B cell (primary cell): ENCODE measurements at regions of chr1 and their contacts with region 1.

Region 1: DNA sequence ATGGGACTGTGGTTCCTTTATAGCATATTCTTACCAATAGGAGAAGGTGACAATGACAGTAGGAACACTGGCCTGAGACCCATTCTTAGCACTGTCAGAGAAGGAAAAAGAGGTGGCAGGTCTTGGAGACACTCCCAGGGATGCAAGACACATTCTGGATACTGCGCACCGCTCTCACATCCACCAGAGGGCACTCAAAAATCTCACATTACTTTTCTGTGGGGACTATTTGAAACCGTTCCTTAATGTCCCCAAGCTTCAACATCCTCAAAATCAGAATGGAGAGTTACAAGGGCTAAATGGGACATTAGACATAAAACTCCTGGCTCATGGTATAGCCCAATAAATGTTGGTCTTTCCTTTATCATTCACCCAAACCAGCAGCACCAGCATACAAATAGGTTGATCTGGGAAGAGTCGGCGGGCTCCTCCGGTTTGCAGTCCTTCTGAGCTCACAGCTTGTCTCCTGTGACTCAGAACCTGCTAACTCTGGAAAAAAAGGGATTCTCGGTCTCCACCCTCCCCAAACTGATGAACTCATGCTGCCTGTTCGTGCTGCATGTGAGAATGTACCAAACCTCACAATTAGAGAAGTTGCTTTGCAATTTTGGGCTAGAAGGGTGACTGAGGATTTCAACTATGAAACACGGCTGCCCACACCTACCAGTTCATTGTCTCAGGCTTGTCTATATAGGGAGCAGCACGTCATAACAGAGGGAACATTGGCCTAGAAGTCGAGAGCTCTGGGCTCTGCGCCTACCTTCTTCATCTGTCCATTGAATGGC is 40.2 kb downstream of the IL12RB2 start:
- DNase-seq: peak; percentile 27
- ATAC-seq: no peak
- H3K4me3 ChIP-seq: no peak overlapping the region
- H3K4me3 Mint-ChIP-seq: no peak overlapping the region
- H3K27ac ChIP-seq: no peak overlapping the region
- H3K27ac Mint-ChIP-seq: no peak overlapping the region
- H3K4me1 ChIP-seq: no peaks in the 10 kb centered on the region
- H3K4me1 Mint-ChIP-seq: peaks cover 5% of the 10 kb centered on the region
- H3K27me3 ChIP-seq: no peaks in the 10 kb centered on the region
- H3K27me3 Mint-ChIP-seq: peaks cover 3% of the 10 kb centered on the region
- CTCF ChIP-seq: peak; percentile 50

Region 2: DNA sequence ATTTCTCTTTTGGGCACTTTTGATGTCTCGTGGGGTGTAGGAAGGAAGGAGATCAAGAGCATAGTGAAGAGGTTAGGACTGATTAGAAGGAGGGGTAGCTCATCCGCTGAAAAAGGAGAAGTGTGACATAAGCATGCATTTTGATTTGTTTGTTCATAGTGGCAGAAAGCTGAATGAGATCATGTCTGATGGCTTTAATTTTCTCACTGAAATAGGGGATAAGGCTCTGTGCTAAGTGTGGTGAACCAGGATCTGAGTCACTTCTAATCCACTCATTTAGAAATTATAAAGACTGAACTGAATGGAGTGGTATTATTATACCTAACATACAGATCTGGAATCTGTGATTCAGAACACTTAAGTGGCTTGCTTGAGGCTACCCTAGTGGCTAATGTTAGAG is 1210.6 kb before region 1 on chr1:
- CTCF ChIA-PET with region 1: no interaction called
- POLR2A ChIA-PET with region 1: no interaction called
- intact Hi-C with region 1: loop called (anchors 10 kb)
- DNase-seq: no peak
- ATAC-seq: no peak
- H3K4me3 ChIP-seq: no peak overlapping the region
- H3K4me3 Mint-ChIP-seq: no peak overlapping the region
- H3K27ac ChIP-seq: no peak overlapping the region
- H3K27ac Mint-ChIP-seq: no peak overlapping the region
- H3K4me1 ChIP-seq: no peaks in the 10 kb centered on the region
- H3K4me1 Mint-ChIP-seq: peaks cover 3% of the 10 kb centered on the region
- H3K27me3 ChIP-seq: no peaks in the 10 kb centered on the region
- H3K27me3 Mint-ChIP-seq: peaks cover 12% of the 10 kb centered on the region
- CTCF ChIP-seq: no peak

Region 3: DNA sequence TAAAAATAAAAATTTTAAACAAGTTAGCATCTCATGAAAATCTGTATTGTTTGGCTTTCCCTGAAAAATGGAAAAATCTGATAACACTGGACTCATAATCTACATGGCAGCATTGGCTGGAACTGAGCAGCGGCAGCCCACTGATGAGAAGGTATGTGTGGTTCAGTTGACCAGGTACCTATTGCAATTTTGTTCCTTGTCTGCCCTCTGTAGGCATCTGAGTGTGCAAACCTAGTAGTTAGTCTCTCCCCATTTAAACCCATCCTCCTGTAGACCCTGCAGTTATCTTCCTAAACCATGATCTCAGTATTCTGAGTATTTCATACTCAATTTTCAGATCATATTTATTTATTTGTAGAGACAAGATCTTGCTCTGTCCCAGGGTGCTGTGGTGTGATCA is 141.8 kb after region 1 on chr1:
- CTCF ChIA-PET with region 1: interaction called, 4 read pairs
- POLR2A ChIA-PET with region 1: no interaction called
- intact Hi-C with region 1: loop called (anchors 5 kb)
- DNase-seq: peak; percentile 36
- ATAC-seq: peak; percentile 41
- H3K4me3 ChIP-seq: no peak overlapping the region
- H3K4me3 Mint-ChIP-seq: no peak overlapping the region
- H3K27ac ChIP-seq: no peak overlapping the region
- H3K27ac Mint-ChIP-seq: no peak overlapping the region
- H3K4me1 ChIP-seq: no peaks in the 10 kb centered on the region
- H3K4me1 Mint-ChIP-seq: no peaks in the 10 kb centered on the region
- H3K27me3 ChIP-seq: no peaks in the 10 kb centered on the region
- H3K27me3 Mint-ChIP-seq: no peaks in the 10 kb centered on the region
- CTCF ChIP-seq: no peak